ENCODE measurements at regions of chr3 and their contacts with region 1.

Region 1: DNA sequence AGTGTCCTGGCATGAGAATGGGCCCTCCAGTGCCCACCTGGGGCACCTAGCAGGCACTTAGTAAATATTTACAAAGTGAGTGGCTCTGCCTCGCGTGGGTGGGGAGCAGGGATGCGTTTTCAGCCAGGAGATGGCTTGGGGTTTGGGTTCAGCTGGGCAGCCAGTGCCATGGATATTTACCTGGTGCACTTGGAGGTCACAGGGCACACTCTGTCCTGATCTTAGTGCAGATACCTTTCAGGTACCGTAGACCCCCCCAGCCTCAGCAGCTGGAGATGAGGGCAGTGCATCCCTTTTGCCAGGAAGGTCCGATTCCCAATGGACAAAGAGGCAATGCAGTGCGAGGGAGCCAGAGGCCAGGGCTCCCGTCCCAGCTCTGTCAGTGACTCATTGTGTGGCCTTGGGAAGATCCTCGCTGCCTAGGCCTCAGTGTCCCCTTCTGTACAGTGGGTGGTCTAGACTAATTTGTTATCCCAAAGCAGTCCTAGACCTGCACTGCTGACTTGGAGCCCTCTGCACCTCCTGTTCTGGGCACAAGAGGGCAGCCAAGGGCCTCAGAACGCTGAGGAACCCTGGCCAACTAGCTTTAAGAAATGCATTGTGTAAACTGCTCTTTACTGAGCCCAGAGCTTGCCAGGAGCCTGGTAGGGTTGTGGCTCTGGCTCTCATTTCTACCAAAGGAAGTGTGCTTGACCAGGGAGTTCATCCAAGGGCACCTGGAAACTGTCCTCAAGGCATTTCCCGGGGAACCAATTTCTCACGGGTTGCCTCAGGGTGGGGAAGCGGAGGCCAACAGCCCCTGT is 16.0 kb downstream of the HDAC11 start:
- DNase-seq: peak; percentile 74

Region 2: GRCh38 chr3:13648060-13649001 is 152.2 kb after region 1 on chr3:
- in situ Hi-C with region 1: loop called (anchors 5 kb)
- DNase-seq: peak; percentile 86

Region 3: DNA sequence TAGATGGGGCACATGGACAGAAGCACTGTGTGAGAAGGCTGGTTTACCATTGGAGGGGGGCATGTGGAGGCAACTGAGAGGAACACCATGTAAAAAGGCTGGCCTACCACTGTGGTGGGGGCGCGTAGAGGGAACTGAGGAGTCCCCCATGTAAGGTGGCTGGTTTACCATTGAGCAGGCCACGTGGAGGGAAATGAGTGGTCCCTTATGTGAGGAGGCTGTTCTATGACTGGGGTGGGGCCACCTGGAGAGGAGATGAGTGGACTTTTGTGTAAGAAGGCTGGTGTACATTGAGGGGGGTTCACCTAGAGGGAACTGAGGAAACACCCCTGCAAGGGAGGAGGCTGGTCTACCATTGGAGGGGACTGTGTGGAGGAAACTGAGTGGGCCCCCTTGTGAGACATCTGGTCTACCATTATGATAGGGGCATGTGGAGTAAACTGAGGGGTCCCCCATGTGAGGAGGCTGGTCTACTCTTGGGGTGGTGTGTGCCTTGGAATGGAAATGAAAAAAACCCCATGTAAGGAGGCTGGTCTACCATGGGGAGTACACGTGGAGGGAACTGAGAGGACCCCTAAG is 209.7 kb after region 1 on chr3:
- in situ Hi-C with region 1: no loop called
- DNase-seq: no peak

Region 4: GRCh38 chr3:13812034-13812471 is 315.9 kb after region 1 on chr3:
- in situ Hi-C with region 1: no loop called
- DNase-seq: no peak